ENCODE measurements at regions of chr19 and their contacts with region 1.

Region 1: GRCh38 chr19:16628183-16628983 is at the start of gene MED26:
- DNase-seq: peak; percentile 96
- H3K4me3 Mint-ChIP-seq: peak within 1 kb of the TSS; percentile 99
- H3K27ac Mint-ChIP-seq: peak within 1 kb of the TSS; percentile 97
- H3K4me1 Mint-ChIP-seq: peaks cover 36% of the 10 kb centered on the region
- H3K27me3 Mint-ChIP-seq: no peaks in the 10 kb centered on the region
- total RNA-seq, gene MED26: 12.0 to 14.5 TPM

Region 2: DNA sequence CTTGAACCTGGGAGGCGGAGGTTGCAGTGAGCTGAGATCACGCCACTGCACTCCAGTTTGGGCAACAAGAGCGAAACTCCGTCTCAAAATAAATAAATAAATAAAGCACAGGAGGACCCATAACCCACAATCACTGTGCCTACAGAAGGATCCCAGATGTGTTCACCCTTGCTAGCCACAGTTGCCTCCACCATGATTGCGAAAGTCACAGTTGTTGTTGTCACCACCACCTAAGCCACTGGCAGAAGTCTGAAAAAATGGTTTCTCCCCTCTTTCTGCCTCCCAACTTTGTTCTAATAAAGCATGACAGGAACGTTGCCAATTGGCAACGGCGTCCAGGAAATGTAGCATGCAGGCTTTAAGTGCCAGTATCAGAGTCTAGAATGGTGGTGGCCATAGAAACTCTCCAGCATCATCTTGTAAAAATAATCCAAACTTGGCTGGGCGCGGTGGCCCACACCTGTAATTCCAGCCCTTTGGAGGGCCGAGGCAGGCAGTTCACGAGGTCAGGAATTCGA is 154.4 kb before region 1 on chr19:
- CTCF ChIA-PET with region 1: no interaction called
- POLR2A ChIA-PET with region 1: no interaction called
- intact Hi-C with region 1: loop called (anchors 1 kb)
- DNase-seq: no peak
- H3K4me3 Mint-ChIP-seq: no peak overlapping the region
- H3K27ac Mint-ChIP-seq: no peak overlapping the region
- H3K4me1 Mint-ChIP-seq: peaks cover 19% of the 10 kb centered on the region
- H3K27me3 Mint-ChIP-seq: no peaks in the 10 kb centered on the region

Region 3: DNA sequence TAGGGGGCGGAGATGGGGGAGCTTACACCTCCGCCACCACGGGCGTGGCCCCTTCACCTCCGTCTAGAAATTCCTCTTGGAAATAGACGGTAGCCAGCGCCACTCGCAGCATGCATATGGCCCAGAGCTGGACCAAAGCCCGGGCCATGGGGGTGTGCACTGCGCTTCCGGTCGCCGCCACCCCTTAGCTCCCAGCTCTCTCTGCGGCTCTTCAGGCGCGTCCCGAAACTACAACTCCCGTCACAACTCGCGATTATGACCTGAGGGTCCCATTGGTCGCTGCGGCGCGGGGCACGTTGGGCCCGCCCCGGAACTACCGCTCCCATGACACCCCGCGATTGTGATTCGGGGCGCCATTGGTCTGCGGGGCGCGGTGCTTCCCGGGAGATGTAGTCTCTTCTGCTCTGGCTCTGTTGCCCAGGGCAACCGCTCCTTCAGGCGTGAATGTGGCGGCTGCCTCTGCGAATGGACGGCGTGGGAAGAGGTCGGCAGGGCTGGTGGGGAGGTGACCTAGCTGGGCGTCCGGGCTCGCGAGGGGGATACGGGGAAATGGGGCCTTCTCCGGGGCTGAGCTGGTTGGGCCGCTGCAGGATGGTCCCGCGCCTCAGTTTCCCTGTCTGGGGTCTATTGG is 132.3 kb before region 1 on chr19 and contains the starts of genes C19orf44 and CALR3:
- CTCF ChIA-PET with region 1: no interaction called
- POLR2A ChIA-PET with region 1: interaction called, 4 read pairs
- intact Hi-C with region 1: loop called (anchors 1 kb)
- DNase-seq: peak; percentile 99
- H3K4me3 Mint-ChIP-seq: peak within 1 kb of the TSS; percentile 93
- H3K27ac Mint-ChIP-seq: peak within 1 kb of the TSS; percentile 74
- H3K4me1 Mint-ChIP-seq: peaks cover 17% of the 10 kb centered on the region
- H3K27me3 Mint-ChIP-seq: no peaks in the 10 kb centered on the region
- total RNA-seq, gene C19orf44: 2.2 to 2.6 TPM
- total RNA-seq, gene CALR3: not detected

Region 4: DNA sequence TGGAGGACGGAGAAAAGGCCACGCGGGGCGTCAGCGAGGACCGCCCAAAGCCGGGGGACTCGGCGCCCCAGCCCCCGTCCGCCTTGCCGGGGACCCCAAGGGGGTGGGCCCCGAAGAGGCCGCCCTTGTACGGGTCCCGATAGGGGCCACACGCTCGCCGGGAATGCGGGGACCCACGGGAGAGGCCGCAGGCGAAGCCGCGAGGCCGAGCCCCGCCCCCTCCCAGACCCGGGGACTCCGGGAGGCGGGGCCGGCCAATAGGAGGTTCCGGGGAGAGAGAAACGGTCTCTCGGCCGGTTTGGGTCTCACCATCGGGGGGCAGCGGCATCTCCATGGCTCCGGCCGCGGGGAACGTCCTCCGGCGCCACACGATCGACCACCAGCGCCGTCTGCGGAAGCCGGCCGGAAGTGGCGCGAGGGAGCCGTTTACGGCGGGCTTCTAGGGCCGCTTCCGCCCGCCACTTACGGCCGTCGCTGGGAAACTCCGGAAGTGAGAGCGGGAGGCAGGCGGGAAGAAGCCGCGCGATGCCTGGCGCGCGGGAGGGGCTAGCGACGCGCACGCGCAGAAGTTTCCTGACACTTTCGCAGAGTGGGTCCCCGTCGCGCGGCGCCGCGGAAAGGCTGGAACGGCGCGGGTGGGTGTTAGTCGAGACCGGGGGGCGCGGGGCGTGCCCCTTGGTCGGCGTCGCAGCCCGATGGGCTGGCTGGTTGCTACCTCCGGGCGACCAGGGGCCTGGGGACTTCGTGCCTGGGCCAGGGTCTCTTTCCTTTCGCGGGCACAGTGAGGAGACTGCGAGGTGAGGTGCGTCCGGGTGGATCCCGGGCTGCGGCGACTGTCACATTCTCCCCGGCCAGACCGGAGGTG is 86.1 kb before region 1 on chr19 and contains the start of gene CHERP:
- CTCF ChIA-PET with region 1: no interaction called
- POLR2A ChIA-PET with region 1: interaction called, 8 read pairs
- intact Hi-C with region 1: loop called (anchors 1 kb)
- DNase-seq: peak; percentile 96
- H3K4me3 Mint-ChIP-seq: peak within 1 kb of the TSS; percentile 84
- H3K27ac Mint-ChIP-seq: peak within 1 kb of the TSS; percentile 81
- H3K4me1 Mint-ChIP-seq: peaks cover 53% of the 10 kb centered on the region
- H3K27me3 Mint-ChIP-seq: no peaks in the 10 kb centered on the region
- total RNA-seq, gene CHERP: 50.8 TPM

Region 5: DNA sequence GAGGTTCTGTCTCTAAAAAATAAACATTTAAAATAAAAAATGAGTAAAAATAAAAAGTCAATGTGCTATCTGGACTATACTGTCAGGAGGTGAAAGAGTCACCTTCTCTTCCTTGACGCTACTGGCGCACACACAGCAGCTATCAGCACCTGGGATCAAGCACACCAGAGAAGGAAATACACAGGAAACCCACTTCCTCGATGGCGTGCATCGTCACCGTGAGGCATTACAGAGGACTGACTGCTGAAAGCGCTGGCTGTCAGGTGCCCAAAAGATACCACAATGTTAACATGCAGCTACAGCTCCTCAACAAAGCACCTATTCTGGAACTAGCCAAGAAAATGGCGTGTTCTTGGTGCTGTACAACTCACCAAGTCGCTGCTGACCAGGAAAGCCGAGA is 62.2 kb before region 1 on chr19:
- CTCF ChIA-PET with region 1: no interaction called
- POLR2A ChIA-PET with region 1: interaction called, 5 read pairs
- intact Hi-C with region 1: loop called (anchors 1 kb)
- DNase-seq: peak; percentile 86
- H3K4me3 Mint-ChIP-seq: peak overlapping the region; percentile 55
- H3K27ac Mint-ChIP-seq: peak overlapping the region; percentile 95
- H3K4me1 Mint-ChIP-seq: peaks cover 32% of the 10 kb centered on the region
- H3K27me3 Mint-ChIP-seq: no peaks in the 10 kb centered on the region

Region 6: GRCh38 chr19:16594131-16594586 is 34.2 kb before region 1 on chr19:
- CTCF ChIA-PET with region 1: no interaction called
- POLR2A ChIA-PET with region 1: interaction called, 13 read pairs
- intact Hi-C with region 1: no loop called
- DNase-seq: peak; percentile 76
- H3K4me3 Mint-ChIP-seq: peak overlapping the region; percentile 65
- H3K27ac Mint-ChIP-seq: peak overlapping the region; percentile 90
- H3K4me1 Mint-ChIP-seq: peaks cover 67% of the 10 kb centered on the region
- H3K27me3 Mint-ChIP-seq: no peaks in the 10 kb centered on the region

Region 7: DNA sequence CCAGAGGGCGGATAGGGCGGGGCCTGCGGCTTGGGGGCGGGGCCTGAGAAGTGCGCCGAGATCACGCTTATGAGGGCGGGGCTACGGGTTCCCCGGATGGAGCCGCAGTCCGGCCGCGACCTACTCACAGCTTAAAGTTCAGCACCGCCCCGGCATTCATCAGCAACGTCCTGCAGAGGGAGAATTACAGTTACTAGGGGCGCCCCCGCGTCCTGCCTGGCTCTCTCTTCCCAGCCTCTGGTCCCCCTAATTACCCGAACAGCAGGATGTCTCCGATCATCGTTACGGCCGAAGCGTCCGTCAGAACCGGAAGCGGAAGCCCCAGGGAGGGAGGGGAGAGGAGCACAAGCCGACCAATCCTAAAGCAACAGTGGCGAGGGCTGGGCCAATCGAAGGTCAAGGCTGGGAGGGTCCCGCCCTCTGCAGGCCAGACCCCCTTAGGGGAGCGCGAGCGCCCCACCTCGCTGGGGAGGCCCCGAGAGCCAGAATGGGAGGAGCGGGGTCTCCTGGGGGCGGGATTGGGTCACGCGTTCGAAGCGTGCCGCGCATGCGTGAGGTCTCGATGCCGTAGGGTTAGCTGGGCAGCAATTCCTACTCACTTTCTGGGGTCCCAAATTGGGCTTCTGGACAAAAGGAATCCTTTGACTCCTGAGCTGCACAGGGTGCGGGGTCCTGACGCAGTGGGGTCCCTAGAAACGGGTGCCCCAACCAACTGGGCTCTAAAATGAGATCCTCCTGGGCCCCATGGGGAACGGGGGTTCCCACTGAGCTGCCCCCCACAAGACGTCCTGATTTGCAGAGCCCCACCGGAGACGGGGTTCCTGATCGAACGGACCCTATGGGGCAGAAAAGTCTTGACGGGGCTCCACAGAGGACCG is 31.7 kb after region 1 on chr19 and contains the start of gene SMIM7:
- CTCF ChIA-PET with region 1: interaction called, 4 read pairs
- POLR2A ChIA-PET with region 1: interaction called, 10 read pairs
- intact Hi-C with region 1: loop called (anchors 1 kb)
- DNase-seq: peak; percentile 99
- H3K4me3 Mint-ChIP-seq: peak within 1 kb of the TSS; percentile 93
- H3K27ac Mint-ChIP-seq: peak within 1 kb of the TSS; percentile 95
- H3K4me1 Mint-ChIP-seq: peaks cover 28% of the 10 kb centered on the region
- H3K27me3 Mint-ChIP-seq: peaks cover 2% of the 10 kb centered on the region
- total RNA-seq, gene SMIM7: 50.5 to 50.9 TPM